Gastrocnemius medialis (tissue), 4 donors: ENCODE measurements at regions of chr19 and their contacts with region 1.

Region 1: GRCh38 chr19:9165256-9165655 is 13.5 kb upstream of the OR7D2 start:
- DNase-seq: no peak
- ATAC-seq: no peak
- H3K4me3 ChIP-seq: no peak overlapping the region
- H3K27ac ChIP-seq: no peak overlapping the region
- H3K4me1 ChIP-seq: no peaks in the 10 kb centered on the region
- H3K27me3 ChIP-seq: no peaks in the 10 kb centered on the region
- CTCF ChIP-seq: no peak
- POLR2A ChIP-seq: no peak

Region 2: GRCh38 chr19:9107375-9107774 is 57.9 kb before region 1 on chr19 and contains the start of gene OR7G2:
- in situ Hi-C with region 1: loop called in 1 of 4 experiments (anchors 10 kb)
- intact Hi-C with region 1: no loop called
- DNase-seq: no peak
- ATAC-seq: no peak
- H3K4me3 ChIP-seq: no peak within 1 kb of the TSS
- H3K27ac ChIP-seq: no peak within 1 kb of the TSS
- H3K4me1 ChIP-seq: no peaks in the 10 kb centered on the region
- H3K27me3 ChIP-seq: no peaks in the 10 kb centered on the region
- CTCF ChIP-seq: no peak
- POLR2A ChIP-seq: no peak
- total RNA-seq, gene OR7G2: not detected

Region 3: DNA sequence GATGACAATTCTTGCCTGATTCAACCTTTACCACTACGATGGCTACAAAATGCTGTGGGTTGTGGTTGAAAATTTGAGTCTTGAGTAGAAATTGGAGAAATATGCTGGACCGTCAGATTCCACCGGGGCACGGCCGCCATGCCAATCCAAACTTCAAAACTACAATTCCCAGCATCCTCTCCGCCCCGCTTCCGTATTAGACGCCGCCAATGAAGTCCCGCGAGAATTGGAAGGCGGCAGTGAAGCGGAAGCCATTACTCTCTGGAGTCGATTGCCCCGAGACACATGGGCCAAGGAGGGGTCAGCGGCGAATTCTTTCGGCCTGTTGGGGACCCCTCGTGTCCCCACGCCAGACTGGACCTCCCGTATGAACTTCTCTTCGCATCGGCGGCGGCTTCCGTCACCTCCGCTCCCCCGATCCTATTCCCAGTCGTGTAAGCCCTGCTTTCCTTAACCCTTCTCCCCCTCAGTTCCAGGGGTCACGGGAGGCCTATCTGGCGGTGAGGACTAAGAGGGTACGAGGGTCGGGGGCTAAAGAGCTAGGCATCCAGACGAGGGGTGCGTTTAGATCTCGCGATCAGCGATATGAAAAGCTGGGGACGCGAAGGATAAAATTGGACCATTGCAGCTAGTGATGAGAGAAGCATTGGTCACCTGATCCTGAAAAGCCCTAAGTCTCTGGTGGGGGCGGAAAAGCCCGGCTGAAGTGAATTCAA is 24.9 kb before region 1 on chr19 and contains the start of gene ZNF317:
- in situ Hi-C with region 1: no loop called
- intact Hi-C with region 1: no loop called
- DNase-seq: peak; percentile 87 to 91
- ATAC-seq: peak; percentile 99
- H3K4me3 ChIP-seq: peak within 1 kb of the TSS; percentile 84 to 88 (median 87)
- H3K27ac ChIP-seq: peak within 1 kb of the TSS; percentile 90 to 93 (median 92)
- H3K4me1 ChIP-seq: peaks cover 16 to 23% of the 10 kb centered on the region in 2 donors
- H3K27me3 ChIP-seq: no peaks in the 10 kb centered on the region
- CTCF ChIP-seq: no peak
- POLR2A ChIP-seq: peak; percentile 28 to 70
- total RNA-seq, gene ZNF317: 9.1 to 15.0 (median 12.2) TPM

Region 4: DNA sequence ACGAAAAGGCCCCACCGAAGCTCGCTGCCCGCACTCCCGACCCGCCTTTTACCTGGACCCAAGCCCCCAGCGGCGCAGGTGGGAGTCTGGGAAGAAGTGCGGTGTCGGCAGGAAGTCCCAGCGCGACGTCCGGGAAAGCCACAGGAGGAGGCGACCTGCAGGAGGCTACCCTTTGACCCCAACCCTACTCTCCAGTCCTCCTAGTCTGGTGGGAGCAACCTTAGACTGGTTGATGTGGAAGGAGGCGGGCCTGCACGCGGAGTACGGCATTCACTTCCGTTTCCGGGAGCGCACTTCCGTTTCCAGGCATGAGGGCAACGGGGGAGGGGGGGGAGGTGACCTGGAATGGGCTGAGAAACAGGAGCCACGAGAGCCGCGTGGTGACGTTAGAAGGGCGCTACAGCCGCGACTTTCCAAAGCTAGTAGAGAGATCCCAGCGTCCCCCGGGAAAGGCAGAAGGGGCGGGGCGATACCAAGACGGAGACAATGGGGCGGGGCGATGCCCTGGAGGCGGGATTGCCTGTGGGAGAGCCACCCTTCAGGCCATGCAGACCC is 241.6 kb after region 1 on chr19:
- in situ Hi-C with region 1: no loop called
- intact Hi-C with region 1: no loop called
- DNase-seq: peak; percentile 28 to 70
- ATAC-seq: peak; percentile 62 to 87
- H3K4me3 ChIP-seq: peak overlapping the region; percentile 63 to 73 (median 68)
- H3K27ac ChIP-seq: peak overlapping the region; percentile 21 to 45 (median 22)
- H3K4me1 ChIP-seq: peaks cover 0 to 5% of the 10 kb centered on the region in 2 donors
- H3K27me3 ChIP-seq: no peaks in the 10 kb centered on the region
- CTCF ChIP-seq: no peak
- POLR2A ChIP-seq: no peak

Region 5: DNA sequence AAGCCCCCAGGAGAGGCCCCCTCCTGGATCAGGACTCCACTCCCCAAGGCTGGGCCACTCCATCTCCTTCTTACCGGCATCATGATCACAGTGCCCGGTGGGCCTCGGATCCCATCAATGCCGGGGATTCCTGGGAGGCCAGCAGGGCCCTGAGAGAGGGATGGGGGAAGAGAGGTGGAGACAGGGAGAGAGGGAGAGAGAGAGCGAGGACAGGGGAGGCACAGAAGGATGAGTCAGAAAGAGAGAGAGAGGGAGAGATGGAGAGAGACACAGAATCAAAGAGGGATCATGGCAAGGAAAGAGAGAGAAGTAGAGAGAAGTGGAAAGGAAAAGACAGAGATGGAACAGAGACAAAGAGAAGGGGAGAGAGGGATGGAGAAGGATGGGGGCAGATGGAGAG is 831.3 kb after region 1 on chr19:
- in situ Hi-C with region 1: no loop called
- intact Hi-C with region 1: no loop called
- DNase-seq: no peak
- ATAC-seq: no peak
- H3K4me3 ChIP-seq: no peak overlapping the region
- H3K27ac ChIP-seq: no peak overlapping the region
- H3K4me1 ChIP-seq: no peaks in the 10 kb centered on the region
- H3K27me3 ChIP-seq: no peaks in the 10 kb centered on the region
- CTCF ChIP-seq: no peak
- POLR2A ChIP-seq: no peak